Dorsolateral prefrontal cortex (tissue), 120 donors: ENCODE measurements at regions of chr1 and their contacts with region 1.

Region 1: DNA sequence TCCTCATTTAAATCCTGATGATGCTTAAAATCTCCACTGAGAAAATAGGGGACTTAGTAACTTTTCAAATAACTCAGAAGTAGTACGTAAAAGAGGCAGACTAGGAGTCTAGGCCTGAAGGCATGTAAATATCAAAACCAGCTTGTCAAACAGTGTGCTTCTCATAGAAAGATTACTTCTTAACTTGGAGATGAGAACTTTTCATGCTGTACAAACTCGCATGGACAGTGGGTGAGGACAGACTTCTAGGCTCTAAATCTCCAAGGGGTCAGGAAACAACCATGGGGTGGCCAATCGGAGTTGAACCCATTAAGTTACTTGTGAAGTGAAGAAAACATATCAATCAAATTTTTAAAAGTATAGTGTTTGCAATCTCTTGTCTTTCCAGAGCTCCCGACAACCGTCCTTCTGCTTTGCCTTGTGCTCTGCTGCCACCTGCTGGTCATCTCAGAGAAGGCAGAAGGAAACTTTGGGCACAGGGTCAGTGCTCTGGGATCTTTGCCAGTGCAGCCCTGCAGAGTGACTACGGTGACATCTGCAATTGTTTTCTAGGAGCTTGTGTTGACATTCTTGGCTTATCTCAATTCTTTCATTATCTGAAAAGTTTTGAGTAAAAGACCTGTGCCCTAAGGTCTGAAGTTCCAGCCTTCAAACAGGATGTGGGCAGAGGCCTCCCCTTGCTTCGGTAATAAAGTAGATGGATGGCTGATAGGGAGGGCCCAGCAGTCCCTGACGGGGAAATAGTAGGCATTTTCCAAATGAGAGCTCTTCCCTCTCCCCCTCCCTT is 105.1 kb upstream of the PDE4B start:
- DNase-seq: peak; percentile 72 to 92 (median 84)
- H3K4me3 ChIP-seq: peak overlapping the region in 1 of 59 donors; percentile 17
- H3K27ac ChIP-seq: peak overlapping the region in 52 of 59 donors; percentile 2 to 90 (median 75)
- H3K27me3 ChIP-seq: no peaks in the 10 kb centered on the region
- CTCF ChIP-seq: peak; percentile 80 to 100 (median 98)

Region 2: GRCh38 chr1:64966158-64966971 is 721.3 kb before region 1 on chr1 and contains the start of gene JAK1:
- intact Hi-C with region 1: loop called in 1 of 2 experiments (anchors 10 kb)
- DNase-seq: peak; percentile 65 to 92 (median 83)
- H3K4me3 ChIP-seq: peak within 1 kb of the TSS; percentile 65 to 99 (median 87)
- H3K27ac ChIP-seq: peak within 1 kb of the TSS; percentile 39 to 96 (median 88)
- H3K27me3 ChIP-seq: no peaks in the 10 kb centered on the region
- CTCF ChIP-seq: peak in 8 of 56 donors; percentile 3 to 38 (median 14)
- total RNA-seq, gene JAK1: 57.7 to 112 (median 83.0) TPM

Region 3: DNA sequence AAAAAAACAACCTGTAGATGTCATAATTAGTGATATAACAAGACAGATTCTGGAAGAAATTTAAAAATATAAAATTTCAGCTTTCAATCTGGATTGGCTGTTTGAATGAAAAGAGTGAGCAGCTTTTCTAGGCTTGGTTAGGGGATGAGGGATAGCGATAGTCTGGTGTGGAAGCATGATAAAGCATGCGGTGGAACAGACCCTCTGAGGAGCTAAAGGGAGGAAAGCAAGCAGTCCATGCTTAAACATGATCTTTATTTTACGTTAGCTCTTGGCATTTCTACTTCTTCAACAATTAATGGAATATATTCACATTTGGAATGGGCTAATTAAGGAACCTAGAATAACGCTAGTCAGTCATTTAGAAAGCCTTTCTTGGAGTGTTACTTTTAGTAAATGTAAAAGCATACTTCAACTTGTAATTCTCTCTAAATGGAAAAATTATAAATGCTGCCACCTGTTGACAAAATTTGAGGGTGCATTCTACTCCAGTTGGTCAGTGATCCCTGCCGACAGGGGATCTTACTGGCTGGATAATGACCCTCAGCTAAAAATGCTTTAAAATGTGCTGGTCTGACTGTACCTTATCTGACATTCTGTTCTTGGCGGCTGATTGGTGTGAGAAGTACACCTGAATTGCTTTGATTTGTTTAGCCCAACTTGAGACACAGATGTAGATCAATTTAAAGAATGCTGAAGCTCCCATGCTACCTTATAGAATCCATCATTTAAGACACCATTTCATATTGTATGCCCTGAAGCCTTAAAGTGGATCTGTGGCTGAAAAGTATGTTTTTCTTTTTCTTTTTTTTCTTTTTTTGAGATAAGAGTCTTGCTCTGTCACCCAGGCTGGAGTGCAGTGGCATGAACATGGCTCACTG is 478.4 kb before region 1 on chr1:
- intact Hi-C with region 1: loop called in 1 of 2 experiments (anchors 2 kb)
- DNase-seq: peak in 1 of 10 donors; percentile 35
- H3K4me3 ChIP-seq: peak overlapping the region in 4 of 59 donors; percentile 7 to 31 (median 14)
- H3K27ac ChIP-seq: peak overlapping the region in 14 of 59 donors; percentile 8 to 63 (median 44)
- H3K27me3 ChIP-seq: no peaks in the 10 kb centered on the region
- CTCF ChIP-seq: peak; percentile 55 to 84 (median 73)

Region 4: GRCh38 chr1:65235867-65236805 is 451.5 kb before region 1 on chr1:
- intact Hi-C with region 1: loop called in 1 of 2 experiments (anchors 5 kb)
- DNase-seq: no peak
- H3K4me3 ChIP-seq: no peak overlapping the region
- H3K27ac ChIP-seq: peak overlapping the region in 2 of 59 donors; percentile 18 to 20
- H3K27me3 ChIP-seq: no peaks in the 10 kb centered on the region
- CTCF ChIP-seq: peak; percentile 43 to 86 (median 72)

Region 5: GRCh38 chr1:65729259-65729658 is 41.6 kb after region 1 on chr1:
- intact Hi-C with region 1: no loop called
- DNase-seq: no peak
- H3K4me3 ChIP-seq: no peak overlapping the region
- H3K27ac ChIP-seq: no peak overlapping the region
- H3K27me3 ChIP-seq: no peaks in the 10 kb centered on the region
- CTCF ChIP-seq: no peak

Region 6: DNA sequence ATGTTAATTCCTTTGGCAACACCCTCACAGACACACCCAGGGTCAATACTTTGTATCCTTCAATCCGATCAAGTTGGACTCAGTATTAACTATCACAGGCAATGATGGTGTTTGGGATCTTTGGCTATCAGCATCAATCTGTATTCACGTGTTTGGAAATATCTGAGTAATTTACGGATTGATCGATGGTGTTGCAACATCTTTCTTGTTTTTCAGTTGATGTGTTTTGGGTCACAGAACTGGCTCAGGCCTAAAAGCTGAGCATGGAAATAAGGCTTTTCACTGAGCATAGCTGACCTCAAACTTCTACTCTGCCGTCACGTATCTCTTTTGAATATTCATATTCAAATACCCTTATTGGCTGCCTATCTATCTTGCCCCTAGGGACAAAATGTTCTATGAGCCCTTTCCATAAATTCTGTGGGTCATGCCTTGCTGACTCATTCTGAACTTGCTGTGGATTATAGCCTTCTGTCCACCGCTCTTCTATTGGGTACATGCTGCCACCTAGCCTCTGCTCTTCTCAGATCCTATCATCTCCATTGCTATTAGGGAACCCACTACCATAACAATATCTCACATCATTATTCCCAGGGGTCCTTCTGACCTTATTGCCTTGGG is 261.1 kb after region 1 on chr1:
- intact Hi-C with region 1: loop called in 1 of 2 experiments (anchors 5 kb)
- DNase-seq: peak in 1 of 10 donors; percentile 35
- H3K4me3 ChIP-seq: no peak overlapping the region
- H3K27ac ChIP-seq: peak overlapping the region in 15 of 59 donors; percentile 7 to 67 (median 42)
- H3K27me3 ChIP-seq: no peaks in the 10 kb centered on the region
- CTCF ChIP-seq: peak in 53 of 56 donors; percentile 16 to 69 (median 41)